ENCODE measurements at regions of chr3 and their contacts with region 1.

Region 1: GRCh38 chr3:14377348-14378169 is 24.8 kb upstream of the SLC6A6 start:
- DNase-seq: no peak
- H3K4me3 ChIP-seq: no peak overlapping the region
- H3K27me3 ChIP-seq: no peaks in the 10 kb centered on the region
- CTCF ChIP-seq: no peak

Region 2: DNA sequence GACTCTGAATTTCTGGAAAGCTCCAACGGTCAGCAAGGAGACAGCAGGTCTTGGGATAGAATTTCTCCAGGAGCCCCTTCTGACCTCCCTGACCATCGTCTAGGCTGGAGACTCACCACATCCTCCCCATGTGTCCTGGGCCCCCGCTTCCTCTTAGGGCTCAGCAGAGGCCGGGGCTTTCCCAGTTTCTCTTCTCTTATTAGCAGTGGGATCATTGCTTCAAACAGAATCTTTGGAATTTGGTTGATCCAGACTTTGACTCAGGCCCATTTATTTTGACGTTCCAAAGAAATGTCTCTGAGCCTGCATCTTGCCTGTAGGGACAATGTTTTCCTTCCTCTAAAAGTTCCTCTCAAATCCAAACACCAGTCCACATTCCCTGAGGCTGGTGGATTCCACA is 13.6 kb before region 1 on chr3:
- CTCF ChIA-PET with region 1: interaction called, 11 read pairs
- POLR2A ChIA-PET with region 1: no interaction called
- DNase-seq: no peak
- H3K4me3 ChIP-seq: no peak overlapping the region
- H3K27me3 ChIP-seq: peaks cover 2% of the 10 kb centered on the region
- CTCF ChIP-seq: no peak

Region 3: DNA sequence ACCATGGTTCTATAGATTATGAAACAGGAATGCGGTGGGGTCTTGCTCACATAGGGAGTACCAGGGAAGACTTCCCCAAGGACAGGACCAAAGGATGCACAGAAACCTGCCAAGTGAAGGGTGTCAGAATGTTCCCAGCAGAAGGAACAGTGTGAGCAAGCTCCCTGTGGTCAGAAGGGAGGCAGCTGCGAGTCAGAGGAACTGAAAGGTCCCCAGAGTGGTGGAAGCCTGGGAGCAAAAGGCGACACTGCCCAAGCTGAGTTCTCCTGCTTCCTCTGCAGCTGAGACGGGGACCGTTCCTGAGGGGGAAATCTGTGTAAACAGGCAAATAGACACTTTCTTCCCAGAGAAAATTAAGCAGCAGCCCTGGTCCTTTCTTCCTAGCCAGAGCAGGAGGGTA is 10.6 kb after region 1 on chr3:
- CTCF ChIA-PET with region 1: interaction called, 20 read pairs
- POLR2A ChIA-PET with region 1: no interaction called
- DNase-seq: no peak
- H3K4me3 ChIP-seq: no peak overlapping the region
- H3K27me3 ChIP-seq: no peaks in the 10 kb centered on the region
- CTCF ChIP-seq: no peak

Measured in BJ (cell line).